ENCODE measurements at regions of chr2 and their contacts with region 1.

Region 1: GRCh38 chr2:105744909-105745853 is at the start of gene NCK2:
- DNase-seq: peak in 4 of 5 donors; percentile 17 to 52 (median 32)
- H3K4me3 ChIP-seq: peak within 1 kb of the TSS; percentile 90
- H3K4me3 Mint-ChIP-seq: peak within 1 kb of the TSS; percentile 88 to 99 (median 97)
- H3K27ac ChIP-seq: peak within 1 kb of the TSS; percentile 81
- H3K27ac Mint-ChIP-seq: peak within 1 kb of the TSS; percentile 92 to 100 (median 97)
- H3K4me1 ChIP-seq: peaks cover 73% of the 10 kb centered on the region
- H3K4me1 Mint-ChIP-seq: peaks cover 78 to 81% (median 80%) of the 10 kb centered on the region in 3 donors
- H3K27me3 ChIP-seq: no peaks in the 10 kb centered on the region
- H3K27me3 Mint-ChIP-seq: peaks cover 0 to 2% of the 10 kb centered on the region in 2 donors
- total RNA-seq, gene NCK2: 72.4 to 76.1 TPM

Region 2: GRCh38 chr2:105576440-105577252 is 168.5 kb before region 1 on chr2:
- CTCF ChIA-PET with region 1: interaction called, 21 read pairs
- POLR2A ChIA-PET with region 1: no interaction called
- DNase-seq: peak in 2 of 5 donors; percentile 32 to 50
- H3K4me3 ChIP-seq: no peak overlapping the region
- H3K4me3 Mint-ChIP-seq: no peak overlapping the region
- H3K27ac ChIP-seq: no peak overlapping the region
- H3K27ac Mint-ChIP-seq: peak overlapping the region in 7 of 8 donors; percentile 1 to 88 (median 55)
- H3K4me1 ChIP-seq: peaks cover 6% of the 10 kb centered on the region
- H3K4me1 Mint-ChIP-seq: peaks cover 7 to 18% (median 13%) of the 10 kb centered on the region in 3 donors
- H3K27me3 ChIP-seq: no peaks in the 10 kb centered on the region
- H3K27me3 Mint-ChIP-seq: peaks cover 1 to 14% of the 10 kb centered on the region in 2 donors

Region 3: DNA sequence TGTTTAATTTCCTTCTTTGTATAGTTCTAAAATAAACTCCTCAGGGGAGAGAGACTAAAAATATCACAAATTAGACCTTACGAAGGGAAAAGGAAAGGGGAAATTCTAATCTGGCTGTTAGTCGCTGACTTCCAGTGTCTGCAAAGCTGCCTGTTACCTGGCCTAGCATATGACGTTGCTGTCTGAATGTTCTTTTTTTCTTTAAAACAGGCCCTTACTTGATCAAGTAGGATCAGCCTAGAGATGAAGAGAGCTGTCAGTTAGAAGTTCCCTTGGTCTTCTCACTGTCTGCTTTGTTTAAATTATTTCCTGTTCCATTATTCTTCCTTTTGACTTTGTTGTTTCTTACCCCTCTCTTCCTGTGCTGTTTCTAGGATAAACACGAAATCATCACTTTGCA is 10.7 kb after region 1 on chr2:
- CTCF ChIA-PET with region 1: interaction called, 7 read pairs
- POLR2A ChIA-PET with region 1: interaction called, 18 read pairs
- DNase-seq: peak in 2 of 5 donors; percentile 55 to 73
- H3K4me3 ChIP-seq: peak overlapping the region; percentile 3
- H3K4me3 Mint-ChIP-seq: peak overlapping the region; percentile 41 to 66 (median 65)
- H3K27ac ChIP-seq: peak overlapping the region; percentile 14
- H3K27ac Mint-ChIP-seq: peak overlapping the region; percentile 80 to 96 (median 87)
- H3K4me1 ChIP-seq: peaks cover 99% of the 10 kb centered on the region
- H3K4me1 Mint-ChIP-seq: peaks cover 96 to 100% (median 100%) of the 10 kb centered on the region in 3 donors
- H3K27me3 ChIP-seq: no peaks in the 10 kb centered on the region
- H3K27me3 Mint-ChIP-seq: no peaks in the 10 kb centered on the region

Region 4: GRCh38 chr2:105775809-105776559 is 30.8 kb after region 1 on chr2:
- CTCF ChIA-PET with region 1: interaction called, 11 read pairs
- POLR2A ChIA-PET with region 1: interaction called, 7 read pairs
- DNase-seq: peak in 4 of 5 donors; percentile 44 to 63 (median 53)
- H3K4me3 ChIP-seq: peak overlapping the region; percentile 52
- H3K4me3 Mint-ChIP-seq: peak overlapping the region; percentile 76 to 89 (median 82)
- H3K27ac ChIP-seq: peak overlapping the region; percentile 58
- H3K27ac Mint-ChIP-seq: peak overlapping the region; percentile 87 to 100 (median 94)
- H3K4me1 ChIP-seq: peaks cover 97% of the 10 kb centered on the region
- H3K4me1 Mint-ChIP-seq: peaks cover 88 to 96% (median 91%) of the 10 kb centered on the region in 3 donors
- H3K27me3 ChIP-seq: no peaks in the 10 kb centered on the region
- H3K27me3 Mint-ChIP-seq: no peaks in the 10 kb centered on the region

Region 5: GRCh38 chr2:105888625-105889400 is 143.6 kb after region 1 on chr2:
- CTCF ChIA-PET with region 1: no interaction called
- POLR2A ChIA-PET with region 1: no interaction called
- DNase-seq: no peak
- H3K4me3 ChIP-seq: no peak overlapping the region
- H3K4me3 Mint-ChIP-seq: peak overlapping the region in 1 of 7 donors; percentile 30
- H3K27ac ChIP-seq: no peak overlapping the region
- H3K27ac Mint-ChIP-seq: peak overlapping the region in 5 of 8 donors; percentile 3 to 84 (median 45)
- H3K4me1 ChIP-seq: peaks cover 64% of the 10 kb centered on the region
- H3K4me1 Mint-ChIP-seq: peaks cover 59 to 69% (median 69%) of the 10 kb centered on the region in 3 donors
- H3K27me3 ChIP-seq: no peaks in the 10 kb centered on the region
- H3K27me3 Mint-ChIP-seq: no peaks in the 10 kb centered on the region